ENCODE measurements at regions of chr4 and their contacts with region 1.

Region 1: DNA sequence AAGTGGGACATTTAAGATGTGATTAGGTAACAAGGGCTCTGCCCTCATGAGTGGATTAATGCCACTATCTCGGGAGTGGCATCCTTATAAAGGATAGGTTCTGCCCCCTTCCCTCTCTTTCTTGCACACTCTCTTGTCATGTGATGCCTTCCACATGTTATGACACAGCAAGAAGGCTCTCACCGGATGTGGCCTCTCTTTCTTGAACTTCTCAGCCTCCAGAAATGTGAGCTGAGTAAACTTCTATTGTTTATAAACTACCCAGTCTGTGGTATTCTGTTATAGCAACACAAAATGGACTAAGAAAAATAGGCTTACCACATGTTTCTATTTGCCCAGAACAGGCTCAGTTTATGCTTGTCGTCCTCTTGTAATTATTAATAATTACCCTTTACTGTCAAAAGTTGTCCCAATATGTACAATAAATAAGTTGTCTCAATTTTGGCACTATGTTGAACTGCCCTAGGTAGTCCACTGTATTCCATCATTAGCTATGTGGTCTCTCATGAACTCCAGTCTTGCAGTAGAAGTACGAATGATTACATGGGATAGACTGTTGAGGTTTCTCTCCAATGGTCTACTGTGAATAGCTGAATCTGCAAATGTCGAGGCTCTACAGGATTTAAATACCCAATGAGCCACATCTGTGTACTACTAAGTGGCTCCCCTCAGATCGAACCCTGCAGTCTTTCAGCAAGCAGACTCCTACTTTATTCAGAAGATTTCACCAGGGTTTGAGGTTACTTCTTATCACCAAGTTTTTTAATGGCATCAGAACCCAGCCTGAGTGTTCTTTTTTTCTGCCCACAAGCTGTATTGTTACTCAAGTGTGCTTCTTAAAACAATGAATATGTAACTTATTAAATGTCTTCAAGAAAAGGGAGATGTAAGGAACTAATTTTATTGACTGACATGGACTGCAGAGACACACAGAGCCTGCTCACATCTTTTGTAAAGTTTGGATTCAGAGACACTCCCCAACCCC is 102.0 kb upstream of the LEF1 start:
- DNase-seq: no peak

Region 2: DNA sequence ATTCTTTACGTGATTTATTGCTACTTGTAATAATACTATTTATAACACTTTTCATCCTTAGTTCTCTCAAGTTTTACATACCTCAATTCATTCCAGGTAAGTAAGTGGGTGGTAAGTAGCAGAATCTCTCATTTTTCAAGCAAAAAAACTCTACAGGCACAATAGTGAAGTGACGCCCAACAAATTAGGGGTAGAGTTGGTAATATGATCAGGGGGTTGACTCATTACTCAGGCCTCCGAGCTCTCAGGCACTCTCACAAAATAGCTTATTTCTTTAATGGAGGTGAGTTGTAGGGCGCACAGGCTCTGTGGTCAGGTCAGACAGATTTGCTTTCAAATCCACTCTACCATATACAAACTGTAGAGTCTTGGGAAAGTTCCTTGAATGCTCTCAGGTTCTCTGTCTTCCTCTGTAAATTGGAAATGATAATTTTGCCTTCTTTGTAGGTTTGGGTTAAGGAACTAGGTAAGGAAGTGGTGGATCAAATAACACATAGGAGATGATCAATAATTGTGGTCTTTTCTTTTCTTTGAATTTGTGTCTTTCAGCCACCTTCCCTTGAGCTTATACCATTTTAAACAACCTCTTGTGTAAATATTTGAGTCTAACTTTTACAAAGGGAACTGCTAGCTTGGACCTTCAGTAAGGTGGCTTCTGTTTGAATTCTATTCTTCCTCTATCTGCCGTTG is 32.9 kb after region 1 on chr4:
- intact Hi-C with region 1: no loop called
- DNase-seq: no peak

Region 3: DNA sequence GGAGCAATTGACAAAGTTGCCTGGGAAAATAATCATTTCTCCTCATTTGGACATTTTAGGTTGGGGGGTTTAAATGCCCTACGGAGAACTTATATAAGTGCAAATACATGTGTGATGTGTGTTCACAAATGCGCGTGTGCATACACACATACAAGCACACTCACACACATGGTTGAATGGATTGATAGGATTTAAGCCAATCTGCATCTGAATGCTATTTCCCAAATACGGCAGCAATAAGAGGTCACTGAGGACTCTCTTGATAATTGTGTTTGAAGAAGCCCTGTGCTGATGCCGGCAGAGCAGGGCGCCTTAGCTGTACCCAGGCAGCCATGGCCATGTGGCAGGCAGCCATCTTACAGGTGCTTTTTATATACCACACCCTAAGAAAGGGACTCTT is 63.3 kb after region 1 on chr4:
- intact Hi-C with region 1: loop called in 1 of 2 experiments (anchors 2 kb)
- DNase-seq: no peak

Region 4: GRCh38 chr4:108370291-108371141 is 99.8 kb after region 1 on chr4:
- intact Hi-C with region 1: no loop called
- DNase-seq: no peak